ENCODE measurements at regions of chr15 and their contacts with region 1.

Region 1: DNA sequence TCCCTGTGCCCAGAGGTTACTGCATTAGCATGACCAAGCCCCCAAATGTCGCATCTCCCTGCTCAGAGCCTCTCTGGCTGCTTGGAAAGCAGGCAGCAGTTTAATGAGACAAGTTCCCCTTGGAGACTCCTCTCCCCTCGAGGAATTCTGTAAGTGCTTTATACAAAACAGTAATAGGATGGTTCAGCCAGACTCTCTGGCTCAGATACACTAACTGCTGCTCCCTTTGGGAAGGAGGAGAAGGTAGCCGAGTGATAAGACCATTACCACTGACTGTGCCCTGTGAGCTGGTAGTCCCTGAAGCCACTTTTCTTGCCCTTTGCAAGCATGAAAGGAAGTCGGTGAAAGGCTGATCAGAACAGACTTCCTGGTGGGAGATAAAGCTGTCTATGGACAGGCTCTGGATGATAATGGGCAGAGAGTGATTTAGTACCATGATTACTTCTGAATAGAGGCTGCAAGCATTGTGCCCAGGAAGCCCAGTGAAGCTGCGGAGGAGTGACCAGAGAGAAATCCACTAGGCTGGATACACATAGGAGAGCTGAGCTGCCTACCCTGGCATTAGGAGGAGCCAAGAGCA is 100.8 kb downstream of the SEMA6D start:
- DNase-seq: no peak
- H3K4me3 ChIP-seq: no peak overlapping the region
- H3K27ac ChIP-seq: no peak overlapping the region
- H3K4me1 ChIP-seq: peaks cover 20% of the 10 kb centered on the region
- H3K27me3 ChIP-seq: no peaks in the 10 kb centered on the region
- CTCF ChIP-seq: no peak

Region 2: GRCh38 chr15:47756872-47757271 is 61.2 kb before region 1 on chr15:
- CTCF ChIA-PET with region 1: no interaction called
- dilution Hi-C with region 1: no loop called
- in situ Hi-C with region 1: no loop called
- intact Hi-C with region 1: no loop called
- DNase-seq: peak; percentile 76
- H3K4me3 ChIP-seq: no peak overlapping the region
- H3K27ac ChIP-seq: no peak overlapping the region
- H3K4me1 ChIP-seq: peaks cover 7% of the 10 kb centered on the region
- H3K27me3 ChIP-seq: no peaks in the 10 kb centered on the region
- CTCF ChIP-seq: no peak

Region 3: GRCh38 chr15:47857776-47858167 is 39.7 kb after region 1 on chr15:
- CTCF ChIA-PET with region 1: no interaction called
- dilution Hi-C with region 1: loop called (anchors 5 kb)
- in situ Hi-C with region 1: no loop called
- intact Hi-C with region 1: no loop called
- DNase-seq: no peak
- H3K4me3 ChIP-seq: no peak overlapping the region
- H3K27ac ChIP-seq: no peak overlapping the region
- H3K4me1 ChIP-seq: no peaks in the 10 kb centered on the region
- H3K27me3 ChIP-seq: peaks cover 4% of the 10 kb centered on the region
- CTCF ChIP-seq: no peak

Region 4: GRCh38 chr15:47870956-47871625 is 53.0 kb after region 1 on chr15:
- CTCF ChIA-PET with region 1: no interaction called
- dilution Hi-C with region 1: no loop called
- in situ Hi-C with region 1: no loop called
- intact Hi-C with region 1: no loop called
- DNase-seq: peak; percentile 12
- H3K4me3 ChIP-seq: no peak overlapping the region
- H3K27ac ChIP-seq: no peak overlapping the region
- H3K4me1 ChIP-seq: no peaks in the 10 kb centered on the region
- H3K27me3 ChIP-seq: no peaks in the 10 kb centered on the region
- CTCF ChIP-seq: no peak